Heart left ventricle (tissue), 16 donors: ENCODE measurements at regions of chr18 and their contacts with region 1.

Region 1: DNA sequence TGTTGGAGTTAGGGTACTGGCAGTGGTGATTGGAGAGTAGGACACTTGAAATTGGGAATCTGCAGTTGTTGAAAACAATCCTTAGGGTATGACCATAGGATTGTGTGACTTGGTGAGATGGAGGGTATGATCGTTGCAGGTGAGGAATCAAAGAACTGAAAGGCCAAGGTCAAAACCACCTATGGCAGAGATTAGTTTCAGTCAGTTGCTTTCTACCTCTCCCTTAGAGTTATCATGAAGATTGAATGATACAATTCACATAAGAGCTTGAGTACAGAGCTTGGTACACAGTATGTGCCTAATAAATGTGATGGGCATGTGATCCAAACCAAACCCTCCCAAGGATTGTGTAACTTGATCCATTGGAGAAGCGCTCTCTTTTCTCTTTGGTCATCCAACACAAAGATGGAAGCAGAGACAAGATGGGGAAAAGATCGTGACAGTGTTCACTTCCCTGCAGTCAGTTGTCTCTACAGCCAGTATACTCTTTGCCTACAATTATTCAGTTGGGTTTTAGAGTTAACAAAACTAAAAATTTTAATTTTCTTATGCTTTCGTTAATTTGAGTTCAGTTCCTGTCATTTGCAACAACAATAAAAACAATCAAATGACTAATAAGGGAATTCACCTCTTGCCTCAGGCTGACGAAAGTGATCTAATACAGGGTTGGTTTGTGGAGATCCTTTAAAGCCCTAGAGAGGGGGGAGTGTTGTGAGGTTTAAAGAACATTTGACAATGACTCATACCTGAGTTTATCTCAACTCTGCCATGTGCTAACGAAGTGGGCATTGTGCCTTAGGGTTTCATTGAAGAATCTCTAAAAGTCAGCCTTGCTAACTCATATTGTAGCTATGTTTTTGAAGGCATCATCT is 14.7 kb upstream of the SMAD2 start:
- DNase-seq: no peak
- ATAC-seq: peak in 1 of 4 donors; percentile 41
- H3K4me3 ChIP-seq: no peak overlapping the region
- H3K27ac ChIP-seq: no peak overlapping the region
- H3K4me1 ChIP-seq: peaks cover 0 to 14% (median 0%) of the 10 kb centered on the region in 12 donors
- H3K27me3 ChIP-seq: no peaks in the 10 kb centered on the region
- CTCF ChIP-seq: no peak
- POLR2A ChIP-seq: no peak

Region 2: DNA sequence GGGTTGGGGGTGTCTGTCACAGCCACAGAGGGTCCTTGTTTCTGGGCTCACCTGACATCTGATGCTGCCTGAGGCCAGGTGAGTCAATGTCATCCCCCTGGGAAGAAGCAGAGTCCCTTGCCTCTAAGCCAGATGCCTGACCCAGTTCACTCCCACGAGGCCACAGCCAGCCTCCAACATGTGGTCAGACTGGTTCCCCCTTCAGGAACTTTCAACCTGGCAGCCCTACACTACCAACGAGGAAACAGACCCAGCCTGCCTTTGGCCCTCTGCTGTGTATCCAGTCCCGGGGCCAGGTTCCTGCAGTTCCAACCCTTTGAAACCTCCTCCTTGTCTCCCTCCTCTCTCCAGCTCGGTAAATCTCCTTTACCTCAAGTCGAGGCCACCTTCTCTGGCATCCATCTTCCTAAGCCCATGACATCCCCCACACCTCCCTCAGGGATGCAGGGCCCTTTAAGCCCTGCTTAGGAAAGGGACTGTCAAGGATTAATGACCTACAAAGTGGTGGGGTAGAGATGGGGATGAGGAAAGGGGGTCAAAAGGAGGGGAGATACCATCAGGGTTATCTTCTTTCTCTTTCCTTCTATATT is 34.5 kb after region 1 on chr18:
- intact Hi-C with region 1: no loop called
- DNase-seq: no peak
- ATAC-seq: no peak
- H3K4me3 ChIP-seq: no peak overlapping the region
- H3K27ac ChIP-seq: no peak overlapping the region
- H3K4me1 ChIP-seq: no peaks in the 10 kb centered on the region
- H3K27me3 ChIP-seq: no peaks in the 10 kb centered on the region
- CTCF ChIP-seq: no peak
- POLR2A ChIP-seq: no peak

Region 3: GRCh38 chr18:47997338-47997780 is 52.2 kb after region 1 on chr18:
- intact Hi-C with region 1: loop called in 2 of 10 experiments (anchors 5 kb)
- DNase-seq: no peak
- ATAC-seq: no peak
- H3K4me3 ChIP-seq: no peak overlapping the region
- H3K27ac ChIP-seq: no peak overlapping the region
- H3K4me1 ChIP-seq: peaks cover 0 to 8% (median 0%) of the 10 kb centered on the region in 12 donors
- H3K27me3 ChIP-seq: no peaks in the 10 kb centered on the region
- CTCF ChIP-seq: peak in 7 of 12 donors; percentile 21 to 37 (median 31)
- POLR2A ChIP-seq: no peak

Region 4: DNA sequence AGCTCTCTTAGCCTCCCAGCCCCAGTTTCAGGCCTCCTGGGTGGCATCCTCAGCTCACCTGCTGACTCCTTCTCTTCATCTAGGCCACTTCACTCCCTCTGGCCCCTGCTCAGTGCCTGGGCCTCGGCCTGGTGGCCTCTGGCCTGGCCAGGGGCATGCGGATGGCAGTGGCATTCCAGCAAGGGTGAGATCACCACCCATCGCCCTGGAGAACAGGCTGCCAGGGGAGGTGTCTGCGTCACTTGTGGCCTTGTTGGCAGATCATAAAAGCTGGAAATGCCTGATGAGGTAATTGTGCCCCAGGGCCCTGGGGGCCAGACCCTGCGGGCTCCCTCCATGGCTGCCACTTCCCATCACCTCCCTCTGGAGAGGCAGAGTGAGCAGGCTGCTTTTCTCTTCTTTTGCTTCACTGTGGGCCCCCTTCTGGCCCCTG is 57.7 kb after region 1 on chr18:
- intact Hi-C with region 1: loop called in 2 of 10 experiments (anchors 5 kb)
- DNase-seq: peak; percentile 74 to 90 (median 77)
- ATAC-seq: peak; percentile 90 to 95 (median 91)
- H3K4me3 ChIP-seq: no peak overlapping the region
- H3K27ac ChIP-seq: peak overlapping the region; percentile 44 to 91 (median 70)
- H3K4me1 ChIP-seq: peaks cover 0 to 23% (median 14%) of the 10 kb centered on the region in 12 donors
- H3K27me3 ChIP-seq: no peaks in the 10 kb centered on the region
- CTCF ChIP-seq: no peak
- POLR2A ChIP-seq: no peak